ENCODE measurements at regions of chr3 and their contacts with region 1.

Region 1: GRCh38 chr3:99186016-99186415 is 284.5 kb upstream of the DCBLD2 start:
- DNase-seq: no peak
- H3K4me3 Mint-ChIP-seq: no peak overlapping the region
- H3K27ac Mint-ChIP-seq: no peak overlapping the region
- H3K4me1 Mint-ChIP-seq: no peaks in the 10 kb centered on the region
- H3K27me3 Mint-ChIP-seq: no peaks in the 10 kb centered on the region

Region 2: GRCh38 chr3:98914210-98915080 is 271.6 kb before region 1 on chr3:
- CTCF ChIA-PET with region 1: no interaction called
- intact Hi-C with region 1: no loop called
- DNase-seq: no peak
- H3K4me3 Mint-ChIP-seq: no peak overlapping the region
- H3K27ac Mint-ChIP-seq: no peak overlapping the region
- H3K4me1 Mint-ChIP-seq: no peaks in the 10 kb centered on the region
- H3K27me3 Mint-ChIP-seq: peaks cover 27% of the 10 kb centered on the region

Region 3: GRCh38 chr3:99172736-99173657 is 13.0 kb before region 1 on chr3:
- CTCF ChIA-PET with region 1: interaction called, 11 read pairs
- intact Hi-C with region 1: no loop called
- DNase-seq: peak; percentile 59
- H3K4me3 Mint-ChIP-seq: no peak overlapping the region
- H3K27ac Mint-ChIP-seq: no peak overlapping the region
- H3K4me1 Mint-ChIP-seq: no peaks in the 10 kb centered on the region
- H3K27me3 Mint-ChIP-seq: peaks cover 2% of the 10 kb centered on the region